ENCODE measurements at regions of chr14 and their contacts with region 1.

Region 1: DNA sequence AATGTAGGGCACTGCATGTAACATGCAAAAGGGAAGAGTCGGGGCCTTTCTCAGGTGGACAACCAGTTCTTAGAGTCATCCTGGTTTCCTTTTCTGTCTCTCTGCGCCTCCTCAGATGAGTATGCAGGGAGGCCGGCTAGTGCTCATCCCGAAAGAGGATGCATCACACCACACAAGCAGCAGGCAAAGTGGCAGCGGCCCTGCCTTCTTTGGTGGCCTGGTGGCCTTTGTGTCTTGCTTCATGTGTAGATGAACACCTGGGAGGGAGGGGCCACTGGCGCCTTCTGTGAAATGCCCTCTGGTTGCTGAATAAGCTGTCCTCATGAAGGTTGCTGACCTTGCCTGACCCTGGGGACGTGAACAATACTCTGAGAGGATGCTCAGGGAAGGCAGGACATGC is 18.0 kb downstream of the SLC24A4 start:
- DNase-seq: no peak
- H3K4me3 ChIP-seq: no peak overlapping the region
- H3K27ac ChIP-seq: no peak overlapping the region
- H3K4me1 ChIP-seq: no peaks in the 10 kb centered on the region
- H3K27me3 ChIP-seq: no peaks in the 10 kb centered on the region
- CTCF ChIP-seq: no peak

Region 2: DNA sequence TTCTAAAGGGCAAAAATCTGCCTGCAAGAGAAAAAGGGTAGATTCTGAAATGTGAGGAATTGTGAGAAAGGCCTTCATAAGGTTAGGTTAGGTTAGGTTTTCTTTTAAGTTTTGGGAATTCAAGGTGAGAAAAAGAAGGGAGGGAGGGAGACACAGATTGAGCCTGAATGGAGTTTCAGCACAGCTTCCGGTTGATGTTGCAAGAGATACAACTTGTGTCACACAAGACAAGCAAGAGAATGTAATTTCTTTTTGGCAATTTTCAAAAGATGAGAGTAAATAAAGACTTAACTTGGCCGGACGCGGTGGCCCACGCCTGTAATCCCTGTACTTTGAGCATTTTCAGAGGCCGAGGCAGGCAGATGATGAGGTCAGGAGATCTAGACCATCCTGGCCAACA is 155.4 kb before region 1 on chr14:
- CTCF ChIA-PET with region 1: no interaction called
- dilution Hi-C with region 1: no loop called
- in situ Hi-C with region 1: no loop called
- intact Hi-C with region 1: no loop called
- DNase-seq: no peak
- H3K4me3 ChIP-seq: no peak overlapping the region
- H3K27ac ChIP-seq: no peak overlapping the region
- H3K4me1 ChIP-seq: no peaks in the 10 kb centered on the region
- H3K27me3 ChIP-seq: no peaks in the 10 kb centered on the region
- CTCF ChIP-seq: no peak

Region 3: GRCh38 chr14:92382677-92383076 is 41.7 kb after region 1 on chr14:
- CTCF ChIA-PET with region 1: no interaction called
- dilution Hi-C with region 1: loop called (anchors 5 kb)
- in situ Hi-C with region 1: no loop called
- intact Hi-C with region 1: no loop called
- DNase-seq: peak; percentile 17
- H3K4me3 ChIP-seq: no peak overlapping the region
- H3K27ac ChIP-seq: no peak overlapping the region
- H3K4me1 ChIP-seq: no peaks in the 10 kb centered on the region
- H3K27me3 ChIP-seq: no peaks in the 10 kb centered on the region
- CTCF ChIP-seq: peak; percentile 24 to 50

Measured in mammary epithelial cell (primary cell).